Activated CD8-positive, alpha-beta T cell treated with anti-CD3 and anti-CD28 coated beads, Interleukin-2, amount 10 ng/mL, durations not matched to agents 7 days and 5 days (primary cell): ENCODE measurements at regions of chr2 and their contacts with region 1.

Region 1: DNA sequence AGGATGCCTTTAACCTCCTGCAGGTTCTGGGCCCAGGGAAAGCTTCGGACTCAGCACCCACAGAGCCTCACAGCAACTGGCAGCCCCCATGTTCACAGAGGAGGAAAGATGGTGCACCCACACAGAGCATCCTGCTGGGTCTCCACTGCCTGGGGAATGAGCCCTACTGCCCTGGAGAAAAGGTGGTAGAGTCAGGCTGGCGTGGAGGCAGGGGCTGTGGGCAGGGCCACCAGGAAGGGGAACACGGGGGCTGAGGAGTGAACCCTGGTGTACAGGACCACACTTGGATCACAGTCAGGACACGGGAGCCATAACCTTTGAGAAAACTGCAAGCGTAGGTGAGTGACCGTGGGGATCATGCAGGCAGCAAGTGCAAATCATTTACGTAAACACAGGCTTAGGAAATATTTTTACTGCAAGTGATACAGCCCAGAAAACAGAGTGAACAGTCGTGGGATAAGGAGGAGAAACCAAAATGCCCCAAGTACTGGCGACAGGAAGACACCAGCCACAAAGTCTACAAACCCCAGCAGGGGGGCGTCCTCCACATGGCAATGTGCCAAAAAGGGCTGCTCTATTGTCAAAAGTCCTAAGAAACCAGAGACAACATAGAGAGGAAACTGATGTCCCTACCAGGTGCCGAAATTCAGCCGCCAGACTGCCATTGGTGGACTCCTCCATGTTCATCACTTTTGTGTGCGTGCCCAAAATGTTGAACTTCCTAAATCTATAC is 27.6 kb downstream of the STAT1 start:
- DNase-seq: no peak
- ATAC-seq: no peak
- H3K4me3 Mint-ChIP-seq: no peak overlapping the region
- H3K27ac Mint-ChIP-seq: peak overlapping the region; percentile 53
- H3K4me1 Mint-ChIP-seq: peaks cover 69% of the 10 kb centered on the region
- H3K27me3 Mint-ChIP-seq: no peaks in the 10 kb centered on the region

Region 2: GRCh38 chr2:191003405-191004309 is 17.3 kb after region 1 on chr2:
- CTCF ChIA-PET with region 1: interaction called, 3 read pairs
- POLR2A ChIA-PET with region 1: interaction called, 11 read pairs
- DNase-seq: no peak
- ATAC-seq: peak; percentile 12
- H3K4me3 Mint-ChIP-seq: no peak overlapping the region
- H3K27ac Mint-ChIP-seq: peak overlapping the region; percentile 31
- H3K4me1 Mint-ChIP-seq: peaks cover 92% of the 10 kb centered on the region
- H3K27me3 Mint-ChIP-seq: no peaks in the 10 kb centered on the region

Region 3: GRCh38 chr2:191114403-191114886 is 128.1 kb after region 1 on chr2:
- CTCF ChIA-PET with region 1: no interaction called
- POLR2A ChIA-PET with region 1: no interaction called
- DNase-seq: peak; percentile 48
- ATAC-seq: peak; percentile 46
- H3K4me3 Mint-ChIP-seq: peak overlapping the region; percentile 53
- H3K27ac Mint-ChIP-seq: peak overlapping the region; percentile 92
- H3K4me1 Mint-ChIP-seq: peaks cover 76% of the 10 kb centered on the region
- H3K27me3 Mint-ChIP-seq: no peaks in the 10 kb centered on the region